PC-3 (cell line): ENCODE measurements at regions of chr9 and their contacts with region 1.

Region 1: GRCh38 chr9:4762108-4762885 is 21.3 kb upstream of the AK3 start:
- DNase-seq: peak; percentile 85
- ATAC-seq: peak; percentile 70
- H3K4me3 ChIP-seq: peak overlapping the region; percentile 61
- H3K27ac ChIP-seq: peak overlapping the region; percentile 32; the same call in 1 of the 2 replicates
- H3K4me1 ChIP-seq: peaks cover 10% of the 10 kb centered on the region; the same call in 1 of the 2 replicates
- H3K27me3 ChIP-seq: no peaks in the 10 kb centered on the region
- CTCF ChIP-seq: peak; percentile 71

Region 2: DNA sequence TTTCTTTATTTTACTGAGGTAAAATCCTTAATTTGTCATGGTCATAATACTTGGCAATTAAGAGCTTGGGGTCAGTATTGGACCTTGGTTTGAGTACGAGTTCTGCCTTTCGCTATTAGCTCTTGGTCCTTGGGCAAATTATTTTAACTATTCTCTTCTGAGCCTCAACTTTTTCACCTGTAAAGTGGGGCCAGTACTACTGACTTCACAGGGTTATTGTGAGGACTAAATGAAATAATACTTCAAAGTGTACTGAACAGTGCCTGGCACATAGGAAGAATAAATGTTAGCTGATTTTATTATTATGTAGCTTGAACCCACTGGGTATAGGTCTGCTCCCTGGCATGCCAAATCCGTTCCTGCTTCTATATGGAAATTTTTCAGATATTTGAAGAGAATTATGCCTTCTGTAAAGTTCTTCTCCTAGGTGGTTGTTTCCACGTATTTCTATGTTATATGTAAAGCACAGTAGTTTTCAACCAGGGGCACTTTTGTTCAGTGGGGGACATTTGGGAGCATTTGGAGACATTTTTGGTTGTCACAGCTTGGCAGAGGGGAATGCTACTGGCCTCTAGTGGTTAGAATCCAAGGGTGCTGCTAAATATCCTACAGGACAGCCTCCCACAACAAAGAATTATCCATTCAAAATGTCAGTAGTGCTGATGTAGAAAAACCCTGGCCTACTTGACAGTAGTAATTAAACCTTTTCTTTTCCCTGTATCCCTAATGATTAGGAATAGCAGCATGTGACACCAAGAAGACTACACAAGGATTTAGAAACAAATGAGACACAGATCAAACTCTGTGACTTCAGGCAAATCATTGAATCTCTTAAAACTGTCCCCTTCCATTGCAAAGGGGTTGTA is 34.9 kb after region 1 on chr9:
- CTCF ChIA-PET with region 1: no interaction called
- POLR2A ChIA-PET with region 1: no interaction called
- intact Hi-C with region 1: loop called (anchors 5 kb)
- DNase-seq: peak; percentile 50
- ATAC-seq: no peak
- H3K4me3 ChIP-seq: no peak overlapping the region
- H3K27ac ChIP-seq: no peak overlapping the region
- H3K4me1 ChIP-seq: peaks cover 9% of the 10 kb centered on the region; the same call in 1 of the 2 replicates
- H3K27me3 ChIP-seq: no peaks in the 10 kb centered on the region
- CTCF ChIP-seq: peak; percentile 73

Region 3: DNA sequence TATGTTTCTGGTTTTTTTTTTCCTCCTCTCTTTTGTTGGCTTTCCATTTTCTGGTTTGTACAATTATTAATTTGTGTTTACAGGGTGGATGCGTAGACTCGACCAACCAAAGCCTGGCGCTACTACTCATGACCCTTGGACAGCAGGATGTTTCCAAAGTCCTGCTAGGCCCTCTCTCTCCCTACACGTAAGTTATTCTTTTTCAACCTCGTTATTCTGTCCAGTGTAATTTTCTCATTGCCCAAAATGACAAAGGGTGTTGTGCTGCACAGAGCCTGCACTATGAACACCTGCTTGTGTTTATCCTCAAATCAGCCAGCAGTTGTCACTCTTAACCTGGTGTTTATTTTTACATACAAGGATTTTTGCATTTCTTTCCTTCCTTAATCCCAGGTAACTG is 87.1 kb after region 1 on chr9:
- CTCF ChIA-PET with region 1: no interaction called
- POLR2A ChIA-PET with region 1: no interaction called
- intact Hi-C with region 1: loop called (anchors 5 kb)
- DNase-seq: peak; percentile 13
- ATAC-seq: 0 out of 2 replicates have a peak, but pooled peaks have one; percentile 38
- H3K4me3 ChIP-seq: no peak overlapping the region
- H3K27ac ChIP-seq: no peak overlapping the region
- H3K4me1 ChIP-seq: no peaks in the 10 kb centered on the region
- H3K27me3 ChIP-seq: no peaks in the 10 kb centered on the region
- CTCF ChIP-seq: peak; percentile 49

Region 4: GRCh38 chr9:4923580-4924544 is 161.6 kb after region 1 on chr9:
- CTCF ChIA-PET with region 1: no interaction called
- POLR2A ChIA-PET with region 1: no interaction called
- intact Hi-C with region 1: loop called (anchors 1 kb)
- DNase-seq: peak; percentile 53
- ATAC-seq: peak; percentile 45; the same call in 1 of the 2 replicates
- H3K4me3 ChIP-seq: no peak overlapping the region
- H3K27ac ChIP-seq: peak overlapping the region; percentile 99
- H3K4me1 ChIP-seq: peaks cover 34% of the 10 kb centered on the region
- H3K27me3 ChIP-seq: no peaks in the 10 kb centered on the region
- CTCF ChIP-seq: peak; percentile 74

Region 5: DNA sequence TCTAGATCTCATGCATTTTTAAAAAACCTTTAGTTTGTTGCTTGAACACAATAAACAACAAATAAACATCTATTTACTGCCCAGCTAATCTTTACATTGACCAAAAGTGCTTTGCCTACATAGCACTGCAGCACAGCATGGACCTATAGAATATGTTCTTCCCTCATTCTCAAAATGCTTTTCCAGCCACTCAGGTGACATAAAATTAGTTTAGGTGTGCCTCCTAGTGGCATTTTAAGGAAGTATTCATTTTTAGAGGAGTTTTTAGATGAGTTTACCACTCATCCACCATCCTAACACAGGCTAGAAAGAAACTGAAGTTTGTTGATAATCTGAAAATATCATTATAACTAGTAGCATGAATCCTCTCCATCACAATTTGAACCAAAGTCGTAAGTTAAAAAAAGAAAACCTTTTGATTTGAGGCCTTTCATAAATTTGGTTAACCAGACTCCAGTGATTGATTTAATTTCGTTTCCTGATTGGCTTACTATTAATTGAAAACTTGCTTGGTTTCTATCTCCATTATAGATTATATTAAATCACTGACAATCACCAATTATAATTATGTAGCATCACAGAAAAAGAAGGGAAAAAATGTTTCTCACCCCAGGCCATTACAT is 662.8 kb after region 1 on chr9:
- CTCF ChIA-PET with region 1: no interaction called
- POLR2A ChIA-PET with region 1: no interaction called
- intact Hi-C with region 1: loop called (anchors 5 kb)
- DNase-seq: peak; percentile 63
- ATAC-seq: peak; percentile 38
- H3K4me3 ChIP-seq: no peak overlapping the region
- H3K27ac ChIP-seq: no peak overlapping the region
- H3K4me1 ChIP-seq: no peaks in the 10 kb centered on the region
- H3K27me3 ChIP-seq: no peaks in the 10 kb centered on the region
- CTCF ChIP-seq: peak; percentile 71